Activated naive CD4-positive, alpha-beta T cell treated with anti-CD3 and anti-CD28 coated beads for 36 hours (primary cell): ENCODE measurements at regions of chr14 and their contacts with region 1.

Region 1: DNA sequence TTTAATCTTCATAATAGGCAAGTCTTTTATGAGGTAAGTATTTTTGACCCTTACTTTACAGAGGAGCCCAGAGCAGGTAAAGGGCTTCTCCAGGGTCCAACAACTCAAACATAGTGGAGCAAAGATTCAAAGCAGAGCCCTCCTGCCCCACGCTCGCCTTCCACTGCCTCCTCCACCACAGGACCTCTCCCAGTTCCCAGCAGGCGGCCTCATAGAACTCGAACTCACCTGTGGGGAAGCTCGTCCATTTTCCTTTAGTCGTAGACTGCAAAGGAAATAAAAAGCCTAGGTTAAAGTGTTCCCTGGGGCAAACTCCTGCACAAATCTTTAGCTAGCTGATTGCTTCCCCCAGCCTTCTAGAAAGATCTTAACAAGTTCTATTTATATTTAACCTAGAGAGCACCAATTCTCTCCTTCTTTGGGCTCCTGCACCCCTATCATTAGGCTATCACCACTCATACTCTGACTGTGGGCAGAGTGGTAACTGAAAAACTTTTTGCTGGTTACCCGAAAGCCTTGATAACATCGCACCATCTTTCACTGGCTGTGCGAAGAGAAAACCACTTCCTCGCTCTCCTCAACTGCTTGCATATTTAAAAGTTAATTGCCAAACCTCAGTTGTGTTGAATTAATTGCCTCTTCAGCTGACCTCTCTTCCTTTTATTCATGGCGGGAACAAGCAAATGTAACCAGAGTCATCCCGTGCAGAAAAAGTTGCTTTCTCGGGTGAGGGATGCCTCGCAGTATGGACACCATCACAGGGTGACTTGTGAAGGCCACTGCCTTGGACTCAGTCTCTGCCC is 299.6 kb downstream of the DPF3 start:
- DNase-seq: peak; percentile 43
- H3K4me3 Mint-ChIP-seq: no peak overlapping the region
- H3K27ac Mint-ChIP-seq: no peak overlapping the region
- H3K4me1 Mint-ChIP-seq: peaks cover 40% of the 10 kb centered on the region
- H3K27me3 Mint-ChIP-seq: no peaks in the 10 kb centered on the region

Region 2: GRCh38 chr14:72615451-72616121 is 21.3 kb after region 1 on chr14:
- CTCF ChIA-PET with region 1: no interaction called
- intact Hi-C with region 1: loop called (anchors 1 kb)
- DNase-seq: no peak
- H3K4me3 Mint-ChIP-seq: no peak overlapping the region
- H3K27ac Mint-ChIP-seq: no peak overlapping the region
- H3K4me1 Mint-ChIP-seq: no peaks in the 10 kb centered on the region
- H3K27me3 Mint-ChIP-seq: no peaks in the 10 kb centered on the region